Natural killer cell (primary cell): ENCODE measurements at regions of chr3 and their contacts with region 1.

Region 1: DNA sequence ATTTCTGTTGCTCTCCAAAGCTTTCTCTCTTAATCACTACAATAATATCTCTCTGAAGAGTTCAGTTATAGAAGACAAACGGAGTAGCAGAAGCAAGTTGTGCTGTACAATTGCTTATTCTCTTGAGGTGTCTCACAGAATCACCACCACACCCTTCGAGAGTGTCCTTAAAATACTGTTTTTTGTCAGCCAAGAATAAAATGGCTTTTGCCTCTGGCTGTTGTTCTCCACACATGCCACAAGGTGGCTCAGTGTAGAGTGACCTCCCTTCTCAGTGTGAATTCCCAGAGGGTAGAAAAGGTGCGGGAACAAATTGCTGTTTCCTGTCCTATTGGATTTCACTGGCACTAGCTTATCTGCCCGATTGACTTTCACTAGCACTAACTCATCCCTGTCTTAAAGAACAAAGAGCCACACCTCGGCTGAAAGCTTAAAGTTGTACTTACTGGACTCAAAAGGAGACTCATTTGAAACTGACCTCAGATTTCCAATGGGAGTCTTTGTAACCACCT is 134.2 kb upstream of the SATB1 start:
- DNase-seq: peak in 1 of 2 donors; percentile 75
- ATAC-seq: peak; percentile 56 to 73 (median 65)
- H3K4me3 ChIP-seq: no peak overlapping the region
- H3K4me3 Mint-ChIP-seq: peak overlapping the region; percentile 52
- H3K27ac ChIP-seq: no peak overlapping the region
- H3K27ac Mint-ChIP-seq: peak overlapping the region; percentile 72 to 83
- H3K4me1 ChIP-seq: peaks cover 3% of the 10 kb centered on the region
- H3K4me1 Mint-ChIP-seq: peaks cover 37 to 39% of the 10 kb centered on the region in 2 donors
- H3K27me3 ChIP-seq: no peaks in the 10 kb centered on the region
- H3K27me3 Mint-ChIP-seq: no peaks in the 10 kb centered on the region
- CTCF ChIP-seq: peak; percentile 74

Region 2: GRCh38 chr3:18527691-18528090 is 31.7 kb before region 1 on chr3:
- intact Hi-C with region 1: loop called (anchors 2 kb)
- DNase-seq: peak in 1 of 2 donors; percentile 25
- ATAC-seq: peak; percentile 81 to 95 (median 87)
- H3K4me3 ChIP-seq: no peak overlapping the region
- H3K4me3 Mint-ChIP-seq: peak overlapping the region; percentile 0
- H3K27ac ChIP-seq: no peak overlapping the region
- H3K27ac Mint-ChIP-seq: peak overlapping the region; percentile 74 to 75
- H3K4me1 ChIP-seq: no peaks in the 10 kb centered on the region
- H3K4me1 Mint-ChIP-seq: peaks cover 14 to 18% of the 10 kb centered on the region in 2 donors
- H3K27me3 ChIP-seq: no peaks in the 10 kb centered on the region
- H3K27me3 Mint-ChIP-seq: no peaks in the 10 kb centered on the region
- CTCF ChIP-seq: no peak

Region 3: DNA sequence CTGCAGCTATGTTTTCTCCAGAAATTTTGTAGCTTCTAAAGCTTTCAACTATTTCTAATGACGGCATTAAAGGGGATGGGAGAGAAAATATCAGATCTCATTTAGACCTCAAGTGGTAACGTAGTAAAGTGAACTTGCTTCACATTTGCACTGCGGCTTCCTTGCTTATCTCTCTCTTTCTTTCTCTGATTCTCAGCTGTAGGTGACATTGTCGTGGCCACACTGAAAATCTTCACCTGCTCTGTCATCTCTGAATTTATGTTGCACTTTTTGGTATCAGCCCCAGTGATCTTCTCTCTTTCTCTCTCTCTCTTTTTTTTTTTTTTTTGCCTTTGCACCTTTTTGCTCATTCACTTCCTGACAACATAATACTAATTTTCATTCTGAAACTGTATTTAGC is 119.9 kb after region 1 on chr3:
- intact Hi-C with region 1: loop called (anchors 5 kb)
- DNase-seq: peak; percentile 18 to 74
- ATAC-seq: peak; percentile 85 to 91 (median 91)
- H3K4me3 ChIP-seq: no peak overlapping the region
- H3K4me3 Mint-ChIP-seq: peak overlapping the region; percentile 60
- H3K27ac ChIP-seq: peak overlapping the region; percentile 70
- H3K27ac Mint-ChIP-seq: peak overlapping the region; percentile 71 to 80
- H3K4me1 ChIP-seq: peaks cover 12% of the 10 kb centered on the region
- H3K4me1 Mint-ChIP-seq: peaks cover 61 to 65% of the 10 kb centered on the region in 2 donors
- H3K27me3 ChIP-seq: no peaks in the 10 kb centered on the region
- H3K27me3 Mint-ChIP-seq: no peaks in the 10 kb centered on the region
- CTCF ChIP-seq: no peak

Region 4: DNA sequence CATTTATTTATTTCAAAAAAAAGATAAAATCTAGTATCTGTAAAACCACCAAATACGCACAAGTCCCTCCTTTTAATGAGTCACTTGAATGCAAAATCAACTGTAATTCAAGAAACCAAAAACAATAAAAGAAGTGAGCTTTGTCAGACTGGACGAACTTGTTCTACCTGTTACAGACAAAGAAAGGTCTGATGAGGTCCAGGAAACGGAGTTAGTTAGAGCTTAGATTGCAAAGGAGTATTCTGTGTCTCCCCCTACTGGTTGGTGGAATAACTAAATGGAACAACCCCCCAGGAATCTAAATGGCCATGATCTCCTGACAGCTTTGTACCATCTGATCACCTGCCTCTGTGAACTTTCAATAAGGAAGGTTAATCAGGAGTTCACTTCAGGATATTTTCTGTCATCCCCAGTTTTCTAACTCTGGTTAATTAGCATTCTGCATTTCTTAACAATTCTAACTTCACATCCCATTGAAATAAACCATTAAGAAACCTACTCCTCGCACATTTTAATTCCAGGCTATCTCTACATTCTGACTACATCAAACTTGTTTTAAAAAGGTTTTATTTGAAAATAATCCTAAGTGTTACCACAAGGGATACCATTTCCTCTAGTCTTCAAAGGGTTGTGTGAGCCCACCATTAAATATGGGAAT is 198.8 kb after region 1 on chr3:
- intact Hi-C with region 1: loop called (anchors 1 kb)
- DNase-seq: peak in 1 of 2 donors; percentile 92
- ATAC-seq: peak; percentile 90 to 99 (median 97)
- H3K4me3 ChIP-seq: no peak overlapping the region
- H3K4me3 Mint-ChIP-seq: no peak overlapping the region
- H3K27ac ChIP-seq: no peak overlapping the region
- H3K27ac Mint-ChIP-seq: peak overlapping the region; percentile 17 to 27
- H3K4me1 ChIP-seq: no peaks in the 10 kb centered on the region
- H3K4me1 Mint-ChIP-seq: peaks cover 13 to 19% of the 10 kb centered on the region in 2 donors
- H3K27me3 ChIP-seq: no peaks in the 10 kb centered on the region
- H3K27me3 Mint-ChIP-seq: no peaks in the 10 kb centered on the region
- CTCF ChIP-seq: peak; percentile 90